Activated CD4-positive, alpha-beta memory T cell treated with anti-CD3 and anti-CD28 coated beads, Interleukin-2, amount 10 ng/mL, durations not matched to agents 7 days and 5 days (primary cell): ENCODE measurements at regions of chr17 and their contacts with region 1.

Region 1: DNA sequence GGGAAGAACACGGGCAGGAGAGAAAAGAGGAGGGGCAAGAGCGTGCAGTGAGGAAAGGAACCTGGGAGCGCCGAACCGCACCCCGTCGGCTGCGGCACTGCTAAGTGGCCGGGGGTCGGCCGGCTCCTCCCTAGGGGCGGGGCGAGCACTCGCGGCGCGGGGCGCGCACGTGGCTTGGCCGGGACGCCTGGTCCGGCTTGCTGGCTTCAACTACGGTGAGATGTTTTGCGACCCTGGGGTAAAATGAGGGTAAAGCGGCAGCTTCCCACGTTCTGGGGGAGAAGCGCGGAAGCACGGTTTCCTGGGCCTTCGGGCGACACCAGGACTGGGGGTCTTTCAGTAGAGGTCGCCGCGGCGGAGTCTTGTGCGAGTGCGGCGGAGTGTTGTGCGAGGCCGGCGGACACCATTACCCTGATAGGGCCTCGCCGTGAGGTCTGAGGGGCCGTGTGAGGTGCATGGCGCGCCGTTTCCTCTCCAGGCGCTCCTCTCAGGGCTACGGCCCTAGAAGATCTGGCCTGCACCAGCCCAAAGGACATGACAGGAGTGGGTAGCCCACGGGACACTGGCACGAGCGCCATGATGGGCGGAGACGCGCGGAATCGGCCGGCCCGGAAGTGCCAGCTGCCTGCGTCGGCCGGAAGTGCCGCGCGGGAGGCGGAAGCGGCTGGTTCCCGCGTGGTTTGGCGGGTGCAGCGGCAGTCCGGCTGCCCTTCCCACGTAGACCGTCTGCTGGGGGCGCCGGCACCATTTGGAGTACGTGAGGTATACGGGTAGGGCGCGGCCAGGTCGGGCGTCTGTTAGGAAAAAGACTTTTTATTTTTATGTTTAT is at the starts of genes MYO19 and PIGW:
- DNase-seq: peak; percentile 89
- H3K4me3 Mint-ChIP-seq: peak within 1 kb of the TSS; percentile 98
- H3K27ac Mint-ChIP-seq: peak within 1 kb of the TSS; percentile 99
- H3K4me1 Mint-ChIP-seq: peaks cover 51% of the 10 kb centered on the region
- H3K27me3 Mint-ChIP-seq: no peaks in the 10 kb centered on the region
- total RNA-seq, gene MYO19: 87.2 to 92.2 TPM
- total RNA-seq, gene PIGW: 6.4 to 6.9 TPM

Region 2: GRCh38 chr17:36486204-36487194 is 48.6 kb before region 1 on chr17 and contains the start of gene ZNHIT3:
- CTCF ChIA-PET with region 1: interaction called, 3 read pairs
- POLR2A ChIA-PET with region 1: interaction called, 21 read pairs
- DNase-seq: peak; percentile 94
- H3K4me3 Mint-ChIP-seq: peak within 1 kb of the TSS; percentile 99
- H3K27ac Mint-ChIP-seq: peak within 1 kb of the TSS; percentile 96
- H3K4me1 Mint-ChIP-seq: peaks cover 55% of the 10 kb centered on the region
- H3K27me3 Mint-ChIP-seq: peaks cover 10% of the 10 kb centered on the region
- total RNA-seq, gene ZNHIT3: 38.1 to 38.9 TPM

Region 3: GRCh38 chr17:36524428-36524876 is 10.6 kb before region 1 on chr17:
- CTCF ChIA-PET with region 1: interaction called, 8 read pairs
- POLR2A ChIA-PET with region 1: interaction called, 14 read pairs
- DNase-seq: peak; percentile 13
- H3K4me3 Mint-ChIP-seq: no peak overlapping the region
- H3K27ac Mint-ChIP-seq: peak overlapping the region; percentile 40
- H3K4me1 Mint-ChIP-seq: peaks cover 32% of the 10 kb centered on the region
- H3K27me3 Mint-ChIP-seq: no peaks in the 10 kb centered on the region

Region 4: DNA sequence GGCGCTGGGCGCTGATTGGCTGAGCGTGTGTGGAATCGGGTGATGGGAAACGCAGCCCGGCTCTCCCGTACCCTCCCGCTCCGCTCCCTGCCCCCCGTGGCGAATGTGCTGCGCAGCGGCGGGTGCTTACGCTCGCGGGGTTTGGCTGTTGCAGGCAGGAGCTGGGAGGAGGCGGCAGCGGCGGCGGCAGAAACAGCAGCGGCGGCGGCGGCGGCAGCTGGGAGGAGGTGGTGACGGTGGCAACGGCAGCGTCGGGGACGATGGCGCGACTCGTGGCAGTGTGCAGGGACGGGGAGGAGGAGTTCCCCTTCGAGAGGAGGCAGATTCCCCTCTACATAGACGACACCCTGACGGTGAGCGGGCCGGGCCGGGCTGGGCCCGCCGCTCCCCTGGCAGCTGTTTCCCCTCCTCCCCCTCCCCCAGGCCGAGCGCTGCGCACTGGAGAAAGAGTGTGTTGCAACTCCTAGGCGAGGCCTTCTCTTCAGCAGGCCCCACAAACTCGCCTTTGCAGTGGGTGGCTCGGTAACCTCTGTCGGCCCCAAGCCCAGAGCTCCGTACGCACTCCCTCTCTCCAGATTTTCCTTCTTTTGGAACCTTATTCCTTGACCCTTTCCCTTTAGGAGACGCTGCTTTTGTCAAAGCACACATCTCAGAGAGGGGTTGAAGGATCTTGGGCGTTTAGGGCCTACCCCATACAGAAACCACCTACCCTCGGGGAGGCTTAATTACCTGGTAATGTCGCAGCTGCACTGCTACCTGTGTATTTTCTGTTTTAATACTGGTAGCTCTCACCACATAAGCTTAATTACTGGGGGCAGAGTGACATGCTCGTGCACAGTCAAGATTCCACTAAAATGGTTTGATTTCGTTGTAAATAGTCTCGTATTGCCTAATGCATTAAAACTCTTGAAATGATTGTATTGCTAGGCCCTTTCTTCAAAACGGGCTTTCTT is 10.7 kb after region 1 on chr17:
- CTCF ChIA-PET with region 1: interaction called, 20 read pairs
- POLR2A ChIA-PET with region 1: interaction called, 160 read pairs
- DNase-seq: peak; percentile 97
- H3K4me3 Mint-ChIP-seq: peak overlapping the region; percentile 96
- H3K27ac Mint-ChIP-seq: peak overlapping the region; percentile 96
- H3K4me1 Mint-ChIP-seq: peaks cover 51% of the 10 kb centered on the region
- H3K27me3 Mint-ChIP-seq: no peaks in the 10 kb centered on the region

Region 5: GRCh38 chr17:36550491-36551417 is 15.7 kb after region 1 on chr17:
- CTCF ChIA-PET with region 1: interaction called, 8 read pairs
- POLR2A ChIA-PET with region 1: interaction called, 160 read pairs
- DNase-seq: no peak
- H3K4me3 Mint-ChIP-seq: no peak overlapping the region
- H3K27ac Mint-ChIP-seq: peak overlapping the region; percentile 41
- H3K4me1 Mint-ChIP-seq: peaks cover 61% of the 10 kb centered on the region
- H3K27me3 Mint-ChIP-seq: no peaks in the 10 kb centered on the region